Keratinocyte (primary cell): ENCODE measurements at regions of chr1 and their contacts with region 1.

Region 1: DNA sequence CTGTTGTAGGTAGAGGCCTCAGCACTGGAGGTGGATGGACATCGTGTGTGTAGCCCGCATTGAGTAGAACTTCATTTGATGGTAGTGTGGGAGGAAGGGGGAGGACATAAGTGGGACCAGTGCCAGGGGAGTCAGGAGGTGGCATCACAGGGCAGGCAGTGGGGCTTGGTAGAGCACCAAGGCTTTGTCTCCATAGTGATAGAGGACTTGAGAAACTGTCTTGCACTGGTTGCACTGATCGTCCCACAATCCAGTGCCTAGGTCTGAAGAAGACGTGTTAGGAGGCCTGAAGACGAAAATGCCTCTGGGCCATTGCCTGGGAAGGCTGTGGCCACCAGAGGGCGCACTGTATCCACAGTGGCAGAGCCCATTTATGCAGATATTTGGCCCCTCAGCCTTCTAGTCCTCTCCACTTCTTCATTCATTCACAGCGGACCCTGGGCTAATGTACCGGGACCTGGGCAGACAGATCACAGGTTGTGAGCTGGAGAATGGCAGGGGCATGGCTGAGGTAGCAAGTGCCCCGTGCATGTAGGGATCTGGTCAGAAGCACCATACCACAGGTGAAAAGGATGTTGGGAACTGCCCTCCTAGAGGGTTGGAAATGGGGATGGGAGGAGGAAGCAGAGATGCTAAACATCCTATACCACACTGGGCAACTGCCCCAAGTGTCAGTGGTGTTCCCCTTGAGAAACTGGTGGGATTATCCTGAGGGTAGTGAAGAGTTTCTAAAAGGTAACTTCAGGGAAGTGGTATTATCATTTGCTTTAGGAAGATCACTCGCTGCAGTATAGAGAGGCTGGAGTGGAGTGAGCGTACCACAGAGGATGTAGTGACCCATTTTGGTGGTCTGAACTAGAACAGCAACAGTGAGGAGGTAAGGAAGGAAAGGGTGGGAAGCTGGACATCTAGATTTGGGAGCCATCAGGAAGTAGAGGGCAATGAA is 95.3 kb downstream of the PIK3R3 start:
- DNase-seq: peak; percentile 11
- H3K4me3 ChIP-seq: no peak overlapping the region
- H3K27ac ChIP-seq: no peak overlapping the region
- H3K4me1 ChIP-seq: peaks cover 5% of the 10 kb centered on the region
- H3K27me3 ChIP-seq: no peaks in the 10 kb centered on the region
- CTCF ChIP-seq: peak; percentile 93 to 99 (median 98)

Region 2: DNA sequence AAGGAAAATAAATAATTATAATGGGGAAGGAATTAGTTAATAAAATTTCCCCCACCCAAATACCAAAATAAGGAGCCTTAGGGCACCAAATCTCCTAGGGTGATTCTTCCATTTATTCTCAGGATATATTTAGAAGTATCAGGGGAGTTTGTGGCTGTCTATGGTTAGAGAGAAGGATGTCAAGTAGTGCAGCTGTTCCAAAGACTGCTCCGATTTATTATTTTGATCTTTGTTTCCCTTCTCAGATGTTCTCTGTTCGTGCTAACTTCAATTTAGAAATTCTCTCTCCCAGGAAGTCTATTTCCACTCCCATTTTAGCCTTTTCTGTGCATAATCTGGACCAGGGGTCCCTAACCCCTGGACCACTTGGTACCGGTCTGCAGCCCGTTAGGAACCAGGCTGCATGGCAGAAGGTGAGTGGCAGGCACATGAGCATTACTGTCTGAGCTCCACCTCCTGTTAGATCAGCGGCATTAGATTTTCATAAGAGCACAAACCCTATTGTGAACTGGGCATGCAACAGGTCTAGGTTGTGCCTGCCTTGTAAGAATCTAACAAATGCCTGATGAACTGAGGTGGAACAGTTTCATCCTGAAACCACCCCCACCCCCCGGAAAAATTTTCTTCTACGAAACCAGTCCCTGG is 243.1 kb before region 1 on chr1:
- dilution Hi-C with region 1: no loop called
- DNase-seq: no peak
- H3K4me3 ChIP-seq: no peak overlapping the region
- H3K27ac ChIP-seq: no peak overlapping the region
- H3K4me1 ChIP-seq: no peaks in the 10 kb centered on the region
- H3K27me3 ChIP-seq: no peaks in the 10 kb centered on the region
- CTCF ChIP-seq: peak in 1 of 3 experiments; percentile 18

Region 3: DNA sequence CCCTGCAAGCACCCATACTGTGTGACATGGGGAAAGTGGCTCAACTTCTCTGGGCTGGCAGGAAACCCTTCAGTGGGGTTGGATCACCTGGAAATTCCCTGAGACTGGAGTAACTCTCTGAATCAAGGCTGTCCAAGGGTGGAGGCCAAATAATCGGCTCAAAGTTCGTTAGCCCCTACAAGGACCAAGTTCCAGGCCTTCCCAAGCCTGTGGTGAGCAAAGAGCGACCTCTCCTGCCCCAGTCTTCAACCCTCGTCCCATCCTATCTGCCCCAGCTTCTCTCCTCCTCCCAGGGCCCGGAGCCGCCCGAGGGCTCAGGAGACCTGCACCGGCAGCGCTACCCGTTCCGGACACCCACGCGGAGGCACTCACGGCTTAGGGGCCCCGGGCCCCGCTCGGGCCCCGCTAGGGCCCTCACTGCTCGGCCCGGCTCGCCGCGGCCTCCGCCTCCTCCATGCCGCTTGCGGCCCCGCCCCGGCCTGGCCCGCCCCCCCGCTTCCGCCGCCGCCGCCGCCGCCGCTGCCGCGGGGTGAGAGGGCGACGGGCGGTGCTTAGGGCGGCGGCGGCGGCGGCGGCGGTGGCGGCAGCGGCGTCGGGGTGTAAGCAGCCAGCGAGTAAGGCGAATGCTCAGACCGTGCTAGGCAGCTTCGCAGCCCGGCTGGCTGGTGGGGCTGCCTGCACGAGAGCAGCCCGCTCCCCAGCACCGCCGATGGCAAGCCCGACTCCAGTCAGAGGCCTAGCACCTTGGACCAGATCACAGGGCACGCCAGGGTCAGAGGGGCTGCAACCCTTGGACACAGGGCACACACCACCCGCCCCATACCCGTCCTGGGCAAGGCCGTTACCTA is 161.0 kb after region 1 on chr1 and contains the start of gene POMGNT1:
- dilution Hi-C with region 1: loop called (anchors 25 kb)
- DNase-seq: no peak
- H3K4me3 ChIP-seq: peak within 1 kb of the TSS; percentile 77 to 90 (median 81)
- H3K27ac ChIP-seq: peak within 1 kb of the TSS; percentile 85
- H3K4me1 ChIP-seq: peaks cover 21% of the 10 kb centered on the region
- H3K27me3 ChIP-seq: no peaks in the 10 kb centered on the region
- CTCF ChIP-seq: peak; percentile 12 to 57 (median 17)
- polyA plus RNA-seq, gene POMGNT1: 49.6 to 64.6 TPM (median 60.9 TPM) in 3 replicates

Region 4: GRCh38 chr1:46278807-46279206 is 241.6 kb after region 1 on chr1:
- dilution Hi-C with region 1: no loop called
- DNase-seq: no peak
- H3K4me3 ChIP-seq: no peak overlapping the region
- H3K27ac ChIP-seq: no peak overlapping the region
- H3K4me1 ChIP-seq: no peaks in the 10 kb centered on the region
- H3K27me3 ChIP-seq: no peaks in the 10 kb centered on the region
- CTCF ChIP-seq: no peak